ENCODE measurements at regions of chr17 and their contacts with region 1.

Region 1: DNA sequence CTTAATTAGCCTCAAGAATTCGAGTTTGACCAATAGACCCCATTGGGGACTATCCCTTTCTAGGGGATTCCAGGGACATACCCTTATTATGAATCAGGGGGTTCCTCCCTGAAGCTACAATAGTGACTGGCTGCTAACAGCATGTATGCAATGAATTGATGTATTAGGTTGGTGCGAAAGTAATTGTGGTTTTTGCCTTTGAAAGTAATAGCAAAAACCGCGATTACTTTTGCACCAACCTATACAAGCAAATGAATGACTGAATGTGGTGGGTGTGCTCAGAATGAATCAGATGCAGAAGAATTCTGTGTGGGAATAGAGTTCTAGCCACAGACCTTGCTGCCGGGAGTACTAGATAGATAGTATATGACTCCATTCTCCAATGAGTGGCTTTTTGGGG is 76.7 kb downstream of the HLF start:
- DNase-seq: peak; percentile 27
- ATAC-seq: peak; percentile 49
- H3K4me3 Mint-ChIP-seq: no peak overlapping the region
- H3K27ac Mint-ChIP-seq: no peak overlapping the region
- H3K4me1 Mint-ChIP-seq: peaks cover 18% of the 10 kb centered on the region
- H3K27me3 Mint-ChIP-seq: peaks cover 20% of the 10 kb centered on the region

Region 2: GRCh38 chr17:54795046-54795445 is 546.4 kb before region 1 on chr17:
- CTCF ChIA-PET with region 1: no interaction called
- POLR2A ChIA-PET with region 1: no interaction called
- intact Hi-C with region 1: no loop called
- DNase-seq: no peak
- ATAC-seq: no peak
- H3K4me3 Mint-ChIP-seq: no peak overlapping the region
- H3K27ac Mint-ChIP-seq: no peak overlapping the region
- H3K4me1 Mint-ChIP-seq: no peaks in the 10 kb centered on the region
- H3K27me3 Mint-ChIP-seq: no peaks in the 10 kb centered on the region

Region 3: GRCh38 chr17:55314784-55315491 is 26.5 kb before region 1 on chr17:
- CTCF ChIA-PET with region 1: interaction called, 4 read pairs
- POLR2A ChIA-PET with region 1: no interaction called
- intact Hi-C with region 1: loop called (anchors 1 kb)
- DNase-seq: peak; percentile 51
- ATAC-seq: peak; percentile 93
- H3K4me3 Mint-ChIP-seq: no peak overlapping the region
- H3K27ac Mint-ChIP-seq: peak overlapping the region; percentile 86
- H3K4me1 Mint-ChIP-seq: peaks cover 13% of the 10 kb centered on the region
- H3K27me3 Mint-ChIP-seq: peaks cover 5% of the 10 kb centered on the region